H1 (cell line): ENCODE measurements at regions of chr5 and their contacts with region 1.

Region 1: DNA sequence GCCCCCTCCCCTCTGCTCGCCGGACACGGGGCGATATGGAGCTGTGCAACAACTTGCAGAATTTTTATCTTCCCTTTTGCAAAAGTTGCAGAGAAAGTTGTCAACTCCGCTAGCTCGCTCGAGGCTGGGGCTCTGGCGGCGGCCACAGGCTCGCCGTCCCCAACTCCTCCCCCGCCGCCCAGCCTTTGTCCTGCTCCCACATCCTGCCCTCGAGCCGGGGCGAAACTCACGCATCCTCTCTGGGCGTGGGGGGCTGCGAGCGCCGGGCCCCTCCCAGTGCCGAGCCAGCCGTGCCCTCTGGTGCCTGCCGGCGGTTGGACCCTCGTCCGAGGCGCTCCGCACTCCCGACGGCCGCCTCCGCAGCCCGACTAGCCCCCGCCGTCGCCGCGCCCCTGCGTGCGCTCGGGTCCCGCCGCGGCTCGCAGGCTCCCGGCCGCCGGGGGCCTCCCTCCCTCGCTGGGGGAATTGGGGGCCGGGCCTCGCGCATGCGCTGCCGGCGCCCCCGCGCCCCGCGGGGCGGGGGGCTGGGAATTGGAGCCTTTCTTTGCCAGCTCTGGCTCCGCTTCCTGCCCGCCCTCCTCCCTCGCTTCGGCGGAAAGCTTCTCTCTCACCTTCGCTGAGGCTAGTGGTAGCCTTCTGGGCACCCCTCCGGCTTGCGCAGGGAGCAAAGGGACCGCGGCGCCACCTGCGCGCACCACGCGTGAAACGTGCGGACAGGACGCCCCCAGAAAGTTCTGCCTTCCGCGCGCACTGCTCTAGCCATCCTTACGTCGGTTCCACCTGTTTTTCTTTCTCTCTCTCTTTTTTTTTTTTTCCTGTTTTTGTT is at the start of gene CCNJL:
- DNase-seq: peak in 1 of 2 experiments; percentile 92
- H3K4me3 ChIP-seq: peak within 1 kb of the TSS; percentile 87 to 93 (median 92)
- H3K27ac ChIP-seq: peak within 1 kb of the TSS; percentile 43; the same call in 1 of the 2 replicates
- H3K4me1 ChIP-seq: peaks cover 4 to 7% (median 6%) of the 10 kb centered on the region in 4 experiments; a peak in 5 of 7 replicates
- H3K27me3 ChIP-seq: no peaks in the 10 kb centered on the region
- CTCF ChIP-seq: no peak
- EP300 ChIP-seq: no peak
- POLR2A ChIP-seq: peak in 1 of 2 experiments; percentile 61; a peak in 2 of 3 replicates
- RAD21 ChIP-seq: no peak; a peak in 1 of 4 replicates
- total RNA-seq, gene CCNJL: 34.6 and 36.2 TPM in 2 replicates

Region 2: GRCh38 chr5:159990506-159990905 is 321.8 kb before region 1 on chr5:
- CTCF ChIA-PET with region 1: no interaction called
- POLR2A ChIA-PET with region 1: no interaction called
- DNase-seq: no peak
- H3K4me3 ChIP-seq: no peak overlapping the region
- H3K27ac ChIP-seq: no peak overlapping the region
- H3K4me1 ChIP-seq: peaks cover 0 to 2% (median 0%) of the 10 kb centered on the region in 4 experiments; a peak in 1 of 7 replicates
- H3K27me3 ChIP-seq: peaks cover 4 to 15% (median 12%) of the 10 kb centered on the region in 4 experiments; a peak in 6 of 7 replicates
- CTCF ChIP-seq: no peak
- EP300 ChIP-seq: no peak
- POLR2A ChIP-seq: no peak
- RAD21 ChIP-seq: no peak

Region 3: DNA sequence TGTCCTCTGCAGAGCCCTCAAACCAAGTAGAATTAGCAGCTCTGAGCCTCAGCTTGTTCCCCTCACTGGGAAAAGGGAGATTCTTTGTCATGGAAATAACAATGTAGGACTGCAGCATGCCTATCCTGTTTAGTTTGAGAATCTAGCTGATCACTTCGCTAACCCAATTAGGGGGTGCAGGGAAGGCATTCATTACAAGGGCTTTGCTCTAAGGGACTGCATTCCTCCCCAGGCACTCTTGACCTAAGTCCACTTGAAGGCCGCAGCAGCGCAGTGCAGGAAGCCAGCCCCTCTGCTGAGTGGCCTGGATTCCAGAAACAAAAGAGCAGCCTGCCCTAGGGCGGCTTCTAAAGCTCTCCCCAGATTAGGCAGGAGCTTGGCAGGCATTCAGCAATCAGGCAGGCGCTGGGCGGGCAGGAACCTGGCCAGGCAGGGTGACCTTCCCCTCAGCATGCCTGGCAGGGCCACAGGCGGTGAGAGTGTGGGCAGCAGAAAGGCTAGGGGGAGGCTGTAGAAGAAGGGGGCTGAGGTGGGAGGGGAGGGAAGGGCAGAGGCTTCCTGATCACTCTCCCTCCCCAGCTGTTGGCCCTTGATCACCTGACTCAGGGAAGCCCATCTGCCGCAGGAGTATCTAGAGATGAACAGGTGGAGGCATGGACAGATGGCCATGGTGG is 24.8 kb before region 1 on chr5:
- CTCF ChIA-PET with region 1: interaction called, 7 read pairs
- POLR2A ChIA-PET with region 1: interaction called, 25 read pairs
- DNase-seq: peak; percentile 81 to 91
- H3K4me3 ChIP-seq: peak overlapping the region in 1 of 4 experiments; percentile 36; a peak in 2 of 8 replicates
- H3K27ac ChIP-seq: peak overlapping the region; percentile 86
- H3K4me1 ChIP-seq: peaks cover 11 to 37% (median 22%) of the 10 kb centered on the region in 4 experiments
- H3K27me3 ChIP-seq: no peaks in the 10 kb centered on the region
- CTCF ChIP-seq: no peak
- EP300 ChIP-seq: peak in 1 of 2 experiments; percentile 85; a peak in 1 of 3 replicates
- POLR2A ChIP-seq: peak; percentile 54 to 64; a peak in 1 of 3 replicates
- RAD21 ChIP-seq: peak in 1 of 2 experiments; percentile 22; a peak in 1 of 4 replicates

Region 4: DNA sequence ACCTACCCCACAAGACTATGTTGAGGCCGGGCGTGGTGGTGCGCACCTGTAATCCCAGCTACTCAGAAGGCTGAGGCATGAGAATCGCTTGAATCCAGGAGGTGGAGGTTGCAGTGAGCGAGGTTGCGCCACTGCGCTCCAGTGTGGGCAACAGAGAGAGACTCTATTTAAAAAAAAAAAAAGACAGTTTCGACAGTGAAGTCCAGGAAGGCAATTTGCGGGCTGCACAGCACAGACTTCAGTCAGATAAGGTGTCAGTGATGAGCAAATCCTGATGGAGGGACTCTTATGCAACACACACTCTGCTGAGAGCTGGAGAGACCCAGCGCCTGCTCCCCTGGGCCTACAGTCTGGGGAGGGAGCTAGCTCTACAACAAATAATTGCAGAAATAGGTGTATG is 14.2 kb before region 1 on chr5:
- CTCF ChIA-PET with region 1: interaction called, 8 read pairs
- POLR2A ChIA-PET with region 1: interaction called, 12 read pairs
- DNase-seq: no peak
- H3K4me3 ChIP-seq: no peak overlapping the region
- H3K27ac ChIP-seq: no peak overlapping the region
- H3K4me1 ChIP-seq: peaks cover 6 to 16% (median 14%) of the 10 kb centered on the region in 4 experiments
- H3K27me3 ChIP-seq: no peaks in the 10 kb centered on the region
- CTCF ChIP-seq: no peak
- EP300 ChIP-seq: no peak
- POLR2A ChIP-seq: no peak
- RAD21 ChIP-seq: no peak